ENCODE measurements at regions of chr2 and their contacts with region 1.

Region 1: GRCh38 chr2:27771548-27772335 is at the start of gene MRPL33:
- DNase-seq: peak; percentile 82 to 94 (median 92)
- ATAC-seq: peak; percentile 89
- H3K4me3 ChIP-seq: peak within 1 kb of the TSS; percentile 93 to 99
- H3K4me3 Mint-ChIP-seq: peak within 1 kb of the TSS; percentile 100
- H3K27ac ChIP-seq: peak within 1 kb of the TSS; percentile 93 to 96
- H3K27ac Mint-ChIP-seq: peak within 1 kb of the TSS; percentile 100
- H3K4me1 ChIP-seq: peaks cover 27% of the 10 kb centered on the region
- H3K4me1 Mint-ChIP-seq: peaks cover 51% of the 10 kb centered on the region
- H3K27me3 ChIP-seq: no peaks in the 10 kb centered on the region
- H3K27me3 Mint-ChIP-seq: peaks cover 4% of the 10 kb centered on the region
- CTCF ChIP-seq: no peak
- total RNA-seq, gene MRPL33: 35.8 to 39.0 TPM

Region 2: DNA sequence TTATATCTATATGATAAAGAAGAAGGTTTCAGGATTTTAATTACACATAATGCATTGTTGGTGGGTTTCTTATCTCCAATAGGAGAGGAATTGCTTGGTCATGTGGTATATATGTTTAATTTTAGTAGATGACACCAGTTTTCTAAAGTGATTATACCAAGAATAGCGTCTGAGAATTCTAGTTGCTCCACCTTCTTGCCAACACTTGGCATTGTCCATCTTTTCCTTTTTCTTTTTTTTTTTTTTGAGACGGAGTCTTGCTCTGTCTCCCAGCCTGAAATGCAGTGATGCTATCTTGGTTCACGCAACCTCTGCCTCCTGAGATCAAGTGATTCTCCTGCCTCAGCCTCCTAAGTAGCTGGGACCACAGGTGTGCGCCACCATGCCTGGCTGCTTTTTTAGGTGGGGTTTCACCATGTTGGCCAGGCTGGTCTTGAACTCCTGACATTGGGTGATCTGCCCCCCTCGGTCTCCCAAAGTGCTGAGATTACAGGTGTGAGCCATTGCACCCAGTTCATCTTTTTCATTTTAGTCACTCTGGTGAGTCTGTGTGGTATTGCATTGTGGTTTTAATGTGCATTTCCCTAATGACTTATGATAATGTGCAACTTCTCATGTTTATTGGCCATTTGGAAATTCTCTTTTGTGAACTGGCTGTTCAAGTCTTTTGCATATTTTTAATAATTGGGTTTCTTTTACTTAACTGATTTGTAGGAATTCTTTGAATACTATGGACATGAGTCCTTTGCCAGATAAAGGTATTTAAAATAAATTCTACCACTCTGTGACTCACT is 226.2 kb before region 1 on chr2:
- CTCF ChIA-PET with region 1: no interaction called
- POLR2A ChIA-PET with region 1: no interaction called
- intact Hi-C with region 1: no loop called
- DNase-seq: no peak
- ATAC-seq: no peak
- H3K4me3 ChIP-seq: no peak overlapping the region
- H3K4me3 Mint-ChIP-seq: no peak overlapping the region
- H3K27ac ChIP-seq: no peak overlapping the region
- H3K27ac Mint-ChIP-seq: no peak overlapping the region
- H3K4me1 ChIP-seq: no peaks in the 10 kb centered on the region
- H3K4me1 Mint-ChIP-seq: no peaks in the 10 kb centered on the region
- H3K27me3 ChIP-seq: peaks cover 0 to 2% of the 10 kb centered on the region in 2 experiments
- H3K27me3 Mint-ChIP-seq: no peaks in the 10 kb centered on the region
- CTCF ChIP-seq: no peak

Region 3: DNA sequence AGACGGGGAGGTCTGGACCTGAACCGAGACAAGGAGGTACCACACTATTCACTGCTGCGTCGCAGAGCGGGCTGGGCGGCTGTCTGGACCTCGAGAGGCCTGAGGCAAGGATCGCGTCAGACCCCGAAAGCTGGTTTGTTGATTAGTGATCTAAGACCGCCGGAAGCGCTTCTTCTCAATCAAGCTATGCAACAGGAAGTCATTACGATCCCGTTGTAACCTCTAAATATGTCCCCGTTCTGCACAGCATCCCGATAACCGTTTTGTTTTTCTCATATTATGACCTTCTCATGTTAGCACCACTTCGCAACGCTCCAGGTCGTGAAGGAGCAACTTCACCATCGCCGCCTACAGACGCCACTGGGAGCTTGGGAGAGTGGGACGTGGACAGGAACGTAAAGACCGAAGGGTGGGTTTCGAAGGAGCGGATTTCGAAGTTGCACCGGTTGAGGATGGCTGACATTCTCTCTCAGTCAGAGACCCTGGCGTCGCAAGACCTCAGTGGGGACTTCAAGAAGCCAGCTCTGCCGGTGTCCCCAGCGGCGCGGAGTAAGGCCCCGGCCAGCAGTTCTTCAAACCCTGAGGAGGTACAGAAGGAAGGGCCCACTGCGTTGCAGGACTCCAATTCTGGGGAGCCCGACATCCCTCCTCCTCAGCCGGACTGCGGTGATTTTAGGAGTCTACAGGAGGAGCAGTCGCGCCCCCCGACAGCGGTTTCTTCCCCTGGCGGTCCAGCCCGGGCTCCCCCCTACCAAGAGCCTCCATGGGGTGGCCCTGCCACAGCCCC is 108.1 kb before region 1 on chr2 and contains the starts of genes SLC4A1AP and SUPT7L:
- CTCF ChIA-PET with region 1: no interaction called
- POLR2A ChIA-PET with region 1: no interaction called
- intact Hi-C with region 1: loop called in 1 of 2 experiments (anchors 1 kb)
- DNase-seq: peak; percentile 54 to 90 (median 74)
- ATAC-seq: peak; percentile 81
- H3K4me3 ChIP-seq: peak within 1 kb of the TSS; percentile 96 to 99
- H3K4me3 Mint-ChIP-seq: peak within 1 kb of the TSS; percentile 100
- H3K27ac ChIP-seq: peak within 1 kb of the TSS; percentile 95 to 98
- H3K27ac Mint-ChIP-seq: peak within 1 kb of the TSS; percentile 100
- H3K4me1 ChIP-seq: peaks cover 28% of the 10 kb centered on the region
- H3K4me1 Mint-ChIP-seq: peaks cover 60% of the 10 kb centered on the region
- H3K27me3 ChIP-seq: no peaks in the 10 kb centered on the region
- H3K27me3 Mint-ChIP-seq: no peaks in the 10 kb centered on the region
- CTCF ChIP-seq: no peak
- total RNA-seq, gene SLC4A1AP: 21.4 to 22.8 TPM
- total RNA-seq, gene SUPT7L: 54.0 to 55.5 TPM